Activated naive CD4-positive, alpha-beta T cell treated with anti-CD3 and anti-CD28 coated beads, Interleukin-2, amount 10 ng/mL, durations not matched to agents 7 days and 5 days (primary cell): ENCODE measurements at regions of chr2 and their contacts with region 1.

Region 1: DNA sequence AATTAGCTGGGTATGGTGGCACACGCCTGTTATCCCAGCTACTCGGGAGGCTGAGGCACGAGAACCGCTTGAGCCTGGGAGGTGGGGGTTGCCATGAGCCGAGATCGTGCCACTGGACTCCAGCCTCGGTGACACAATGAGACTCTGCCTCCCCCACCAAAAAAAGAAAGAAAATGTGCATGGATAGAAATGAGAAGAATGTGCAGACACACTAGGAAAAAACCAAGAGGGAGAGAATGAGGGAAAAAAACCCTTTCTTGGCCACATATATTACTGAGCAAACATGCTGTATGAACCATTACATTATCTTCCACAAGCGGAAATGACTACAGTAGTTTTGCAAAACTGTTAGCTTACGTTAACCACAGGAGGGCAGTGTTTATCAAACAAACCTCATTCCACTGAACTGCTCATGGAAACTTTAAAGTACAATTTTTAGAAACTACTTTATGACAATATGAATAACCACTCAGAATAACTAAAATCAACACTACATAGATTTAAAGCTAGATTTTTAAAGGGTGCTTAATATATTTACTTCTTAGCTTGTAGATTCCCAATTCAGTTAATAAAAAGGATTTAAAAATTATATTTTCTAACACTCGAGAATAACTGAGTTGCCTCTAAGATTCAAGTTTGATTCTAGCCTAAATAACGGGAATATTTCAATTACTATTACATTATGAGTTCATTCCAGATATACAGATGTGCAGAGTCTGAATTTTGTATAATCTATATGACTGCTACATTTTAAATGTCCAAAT is 26.4 kb downstream of the ASXL2 start:
- DNase-seq: peak; percentile 29
- H3K4me3 Mint-ChIP-seq: peak overlapping the region; percentile 32
- H3K27ac Mint-ChIP-seq: peak overlapping the region; percentile 28
- H3K4me1 Mint-ChIP-seq: peaks cover 40% of the 10 kb centered on the region
- H3K27me3 Mint-ChIP-seq: no peaks in the 10 kb centered on the region

Region 2: DNA sequence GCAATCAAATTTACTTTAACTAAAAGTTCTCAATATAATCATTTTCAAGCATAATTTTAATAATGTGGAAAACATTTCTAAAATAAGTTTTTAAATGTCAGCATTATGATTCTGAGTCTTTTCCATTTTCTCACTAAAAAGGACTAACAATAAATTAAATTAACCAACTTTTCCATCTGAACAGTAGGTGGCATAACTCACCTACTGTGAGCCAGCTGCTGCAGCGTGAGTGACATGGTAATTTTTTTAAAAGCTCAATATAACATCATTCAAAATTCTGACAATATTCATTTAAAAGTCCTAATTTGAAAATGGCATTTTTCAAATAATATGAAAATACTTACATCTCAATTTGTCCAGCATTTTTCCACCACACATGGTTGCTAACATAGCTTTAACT is 245.0 kb before region 1 on chr2:
- CTCF ChIA-PET with region 1: interaction called, 35 read pairs
- DNase-seq: no peak
- H3K4me3 Mint-ChIP-seq: no peak overlapping the region
- H3K27ac Mint-ChIP-seq: no peak overlapping the region
- H3K4me1 Mint-ChIP-seq: peaks cover 7% of the 10 kb centered on the region
- H3K27me3 Mint-ChIP-seq: no peaks in the 10 kb centered on the region

Region 3: GRCh38 chr2:25817006-25817405 is 34.9 kb before region 1 on chr2:
- CTCF ChIA-PET with region 1: no interaction called
- DNase-seq: no peak
- H3K4me3 Mint-ChIP-seq: no peak overlapping the region
- H3K27ac Mint-ChIP-seq: peak overlapping the region; percentile 61
- H3K4me1 Mint-ChIP-seq: peaks cover 37% of the 10 kb centered on the region
- H3K27me3 Mint-ChIP-seq: no peaks in the 10 kb centered on the region

Region 4: DNA sequence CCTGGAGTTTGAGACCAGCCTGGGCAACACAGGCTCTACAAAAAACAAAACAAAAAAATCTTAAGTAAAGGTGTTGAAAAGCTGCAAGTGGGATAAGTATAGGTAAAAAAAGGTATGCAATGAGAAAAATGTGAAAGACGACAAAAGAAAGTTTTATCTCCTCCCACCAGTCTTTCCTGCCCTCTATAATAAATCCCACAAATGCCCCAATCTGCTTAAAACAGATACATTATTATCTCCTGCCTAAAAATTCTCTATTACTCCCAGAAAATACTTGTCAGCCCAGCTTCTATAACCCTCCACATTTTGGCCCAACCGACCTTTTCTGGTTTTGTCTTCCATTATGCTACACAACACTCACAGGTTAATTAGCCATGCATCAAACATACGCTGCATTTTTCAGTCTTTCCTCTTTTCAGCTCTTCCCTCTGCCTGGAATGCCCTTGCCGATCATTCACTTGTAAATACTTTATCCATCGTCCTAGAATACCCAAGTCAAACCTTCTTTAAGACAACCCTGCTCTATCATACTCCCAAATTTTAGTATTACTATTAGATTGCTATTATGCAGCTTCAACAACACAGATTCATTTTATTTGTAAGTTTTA is 15.6 kb after region 1 on chr2:
- CTCF ChIA-PET with region 1: interaction called, 11 read pairs
- DNase-seq: no peak
- H3K4me3 Mint-ChIP-seq: no peak overlapping the region
- H3K27ac Mint-ChIP-seq: no peak overlapping the region
- H3K4me1 Mint-ChIP-seq: peaks cover 3% of the 10 kb centered on the region
- H3K27me3 Mint-ChIP-seq: no peaks in the 10 kb centered on the region

Region 5: DNA sequence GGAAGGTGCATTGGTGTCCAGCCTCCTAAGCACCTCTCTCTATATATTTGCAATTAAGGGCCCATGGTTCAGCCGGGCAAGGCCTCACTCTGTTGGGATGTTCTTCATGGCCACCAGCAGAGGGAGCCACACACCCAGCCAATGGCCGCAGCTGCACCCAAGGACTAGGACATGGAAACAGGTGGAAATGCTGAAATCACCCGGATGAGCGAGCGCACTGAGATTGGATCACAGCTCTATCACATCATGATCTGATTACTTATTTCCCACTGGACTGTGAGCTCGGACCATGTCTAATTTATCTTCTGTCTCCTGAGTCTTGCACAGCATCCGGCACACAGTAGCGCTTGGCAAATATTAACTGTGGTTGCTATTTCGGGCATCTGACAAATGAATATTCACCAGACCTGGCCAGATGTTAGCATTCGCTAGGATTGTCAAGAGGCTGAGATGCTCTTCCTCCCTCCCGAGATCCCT is 99.2 kb after region 1 on chr2:
- CTCF ChIA-PET with region 1: interaction called, 37 read pairs
- DNase-seq: peak; percentile 80
- H3K4me3 Mint-ChIP-seq: no peak overlapping the region
- H3K27ac Mint-ChIP-seq: no peak overlapping the region
- H3K4me1 Mint-ChIP-seq: no peaks in the 10 kb centered on the region
- H3K27me3 Mint-ChIP-seq: peaks cover 7% of the 10 kb centered on the region

Region 6: GRCh38 chr2:26144953-26145680 is 293.2 kb after region 1 on chr2:
- CTCF ChIA-PET with region 1: interaction called, 20 read pairs
- DNase-seq: peak; percentile 75
- H3K4me3 Mint-ChIP-seq: no peak overlapping the region
- H3K27ac Mint-ChIP-seq: no peak overlapping the region
- H3K4me1 Mint-ChIP-seq: no peaks in the 10 kb centered on the region
- H3K27me3 Mint-ChIP-seq: peaks cover 13% of the 10 kb centered on the region